ENCODE measurements at regions of chr9 and their contacts with region 1.

Region 1: DNA sequence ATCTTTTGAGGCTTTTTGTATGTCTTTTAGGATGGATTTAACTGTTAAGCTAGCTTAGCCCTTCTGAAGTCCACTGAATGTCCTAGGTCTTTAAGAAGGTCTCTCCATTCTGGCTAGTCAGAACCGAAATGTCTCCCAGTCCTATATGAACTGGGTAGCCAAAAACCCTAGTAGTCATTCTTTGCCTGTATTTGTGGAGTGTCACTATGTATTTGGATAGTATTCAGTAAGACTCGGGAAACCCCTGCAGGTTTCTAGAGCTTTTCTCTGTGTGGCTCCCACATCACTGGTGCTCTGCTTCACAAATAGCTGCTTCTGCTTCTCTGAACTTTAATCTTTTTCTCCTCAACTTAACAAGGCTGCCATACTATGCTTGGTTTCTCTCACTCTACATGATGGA is 68.0 kb downstream of the RIC1 start:
- DNase-seq: no peak
- ATAC-seq: no peak
- H3K4me3 ChIP-seq: no peak overlapping the region
- H3K27ac ChIP-seq: no peak overlapping the region
- H3K4me1 ChIP-seq: peaks cover 0 to 5% (median 0%) of the 10 kb centered on the region in 3 donors
- H3K27me3 ChIP-seq: no peaks in the 10 kb centered on the region
- CTCF ChIP-seq: no peak

Region 2: DNA sequence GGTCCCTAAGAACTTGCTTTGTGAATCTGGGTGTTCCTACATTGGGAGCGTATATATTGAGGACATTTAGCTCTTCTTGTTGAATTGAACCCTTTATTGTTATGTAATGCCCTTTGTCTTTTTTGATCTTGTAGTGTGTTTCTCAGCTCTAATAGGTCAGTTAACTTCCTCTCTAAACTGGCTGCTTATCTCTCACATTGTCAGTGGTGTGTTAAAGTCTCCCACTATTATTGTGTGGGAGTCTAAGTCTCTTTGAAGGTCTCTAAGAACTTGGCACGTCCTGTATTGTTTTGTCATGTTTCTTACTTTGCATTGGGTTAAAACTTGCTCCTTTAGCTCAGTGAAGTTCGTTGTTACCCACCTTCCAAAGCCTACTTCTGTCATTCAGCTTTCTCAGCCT is 31.8 kb before region 1 on chr9:
- intact Hi-C with region 1: loop called in 1 of 3 experiments (anchors 5 kb)
- DNase-seq: no peak
- ATAC-seq: no peak
- H3K4me3 ChIP-seq: no peak overlapping the region
- H3K27ac ChIP-seq: no peak overlapping the region
- H3K4me1 ChIP-seq: no peaks in the 10 kb centered on the region
- H3K27me3 ChIP-seq: no peaks in the 10 kb centered on the region
- CTCF ChIP-seq: no peak

Measured in pancreas (tissue), 10 donors.